ENCODE measurements at regions of chr12 and their contacts with region 1.

Region 1: DNA sequence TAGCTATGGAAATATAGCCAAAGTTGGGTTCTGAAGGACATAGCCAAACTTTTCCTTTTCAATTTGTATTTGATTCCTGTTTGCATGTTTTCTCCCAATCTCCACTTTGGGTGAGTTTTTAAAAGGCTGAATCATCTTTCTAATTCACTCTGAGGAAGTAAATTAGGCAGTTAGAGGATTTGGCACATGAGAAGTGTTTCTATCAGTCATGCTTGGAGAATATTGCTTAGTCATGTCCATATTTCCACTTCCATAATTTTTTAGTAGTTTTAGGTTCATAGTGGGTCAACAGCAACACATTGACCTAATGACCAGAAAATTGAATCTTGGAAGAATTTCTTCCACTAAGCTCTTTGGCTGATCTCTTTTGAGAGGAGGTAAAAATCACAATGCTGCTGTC is 21.8 kb downstream of the IRAK3 start:
- DNase-seq: no peak
- ATAC-seq: no peak
- H3K4me3 ChIP-seq: no peak overlapping the region
- H3K27ac ChIP-seq: no peak overlapping the region
- H3K4me1 ChIP-seq: no peaks in the 10 kb centered on the region
- H3K27me3 ChIP-seq: no peaks in the 10 kb centered on the region; the same call in 1 of the 2 replicates
- CTCF ChIP-seq: no peak

Region 2: DNA sequence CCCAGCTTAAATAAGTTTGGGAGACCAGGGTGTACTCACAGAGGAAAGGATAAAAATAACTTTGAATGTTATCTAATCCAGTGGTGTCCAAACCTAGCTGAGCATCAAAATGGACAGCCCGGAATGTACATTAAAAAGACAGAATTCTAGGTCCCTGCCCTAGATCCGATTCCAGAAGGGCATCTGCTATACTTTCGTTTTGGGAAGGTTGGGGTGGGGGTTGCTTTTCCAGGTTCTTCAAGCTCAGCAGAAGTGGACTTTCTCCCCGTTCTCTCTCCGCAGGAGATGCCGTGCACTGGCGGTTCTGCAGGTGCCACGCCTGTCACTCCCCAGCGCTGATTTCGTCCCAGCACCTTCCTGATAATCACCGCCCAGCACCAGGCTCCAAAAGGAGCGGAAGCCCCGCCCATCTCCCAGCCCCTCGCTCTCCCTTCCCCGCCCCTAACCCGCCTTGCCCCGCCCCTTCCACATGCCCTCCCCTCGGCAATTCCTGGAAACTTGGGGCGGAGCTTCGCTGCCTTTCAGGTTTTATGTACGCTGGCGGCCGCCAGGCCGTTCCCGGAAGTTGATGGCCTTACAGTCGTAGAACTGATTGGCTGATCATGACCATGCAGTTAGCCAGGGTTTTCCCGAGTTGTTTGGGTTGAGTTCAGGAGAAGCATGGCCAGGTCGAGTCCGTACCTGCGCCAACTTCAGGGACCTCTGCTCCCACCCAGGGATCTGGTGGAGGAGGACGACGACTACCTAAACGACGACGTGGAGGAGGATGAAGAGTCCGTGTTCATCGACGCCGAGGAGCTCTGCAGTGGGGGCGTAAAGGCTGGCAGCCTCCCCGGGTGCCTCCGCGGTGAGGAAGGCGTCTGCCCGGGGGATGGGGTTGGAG is 91.3 kb after region 1 on chr12 and contains the start of gene HELB:
- CTCF ChIA-PET with region 1: no interaction called
- POLR2A ChIA-PET with region 1: interaction called, 19 read pairs
- in situ Hi-C with region 1: no loop called
- intact Hi-C with region 1: no loop called
- DNase-seq: peak; percentile 76
- ATAC-seq: peak; percentile 99
- H3K4me3 ChIP-seq: peak within 1 kb of the TSS; percentile 87 to 89
- H3K27ac ChIP-seq: peak within 1 kb of the TSS; percentile 86
- H3K4me1 ChIP-seq: peaks cover 9% of the 10 kb centered on the region
- H3K27me3 ChIP-seq: peaks cover 2% of the 10 kb centered on the region; the same call in 1 of the 2 replicates
- CTCF ChIP-seq: no peak
- total RNA-seq, gene HELB: 4.9 TPM

Region 3: DNA sequence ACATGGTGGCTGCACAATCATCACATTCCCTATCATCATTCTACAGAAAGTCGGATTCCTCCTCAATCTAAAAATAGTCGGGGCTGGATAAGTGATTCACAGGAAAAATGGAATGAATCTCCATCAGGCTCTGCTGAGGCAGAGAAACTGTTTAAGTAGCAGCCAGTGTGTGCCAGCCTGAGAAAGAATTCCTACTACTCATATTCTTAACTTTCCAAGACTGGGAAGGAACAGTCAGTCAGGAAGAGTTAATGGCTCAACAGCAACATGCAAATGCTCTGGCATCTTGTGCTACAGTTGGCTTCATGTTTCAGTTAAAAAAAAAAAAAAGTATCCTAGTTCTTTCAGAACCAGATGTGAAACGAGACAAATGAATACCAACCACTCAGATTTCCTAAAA is 281.0 kb after region 1 on chr12:
- CTCF ChIA-PET with region 1: no interaction called
- POLR2A ChIA-PET with region 1: no interaction called
- in situ Hi-C with region 1: no loop called
- intact Hi-C with region 1: no loop called
- DNase-seq: no peak
- ATAC-seq: no peak
- H3K4me3 ChIP-seq: no peak overlapping the region
- H3K27ac ChIP-seq: no peak overlapping the region
- H3K4me1 ChIP-seq: no peaks in the 10 kb centered on the region
- H3K27me3 ChIP-seq: peaks cover 8% of the 10 kb centered on the region; the same call in 1 of the 2 replicates
- CTCF ChIP-seq: no peak